ENCODE measurements at regions of chr14 and their contacts with region 1.

Region 1: GRCh38 chr14:34098045-34098984 is 147.4 kb upstream of the EGLN3 start:
- DNase-seq: peak; percentile 53
- H3K4me3 ChIP-seq: no peak overlapping the region
- H3K27ac ChIP-seq: no peak overlapping the region
- H3K4me1 ChIP-seq: peaks cover 13% of the 10 kb centered on the region
- H3K27me3 ChIP-seq: no peaks in the 10 kb centered on the region
- CTCF ChIP-seq: peak; percentile 52 to 69

Region 2: GRCh38 chr14:33839193-33840076 is 258.9 kb before region 1 on chr14:
- CTCF ChIA-PET with region 1: interaction called, 10 read pairs
- dilution Hi-C with region 1: loop called (anchors 5 kb)
- in situ Hi-C with region 1: no loop called
- intact Hi-C with region 1: loop called (anchors 1 kb)
- DNase-seq: peak; percentile 24
- H3K4me3 ChIP-seq: no peak overlapping the region
- H3K27ac ChIP-seq: no peak overlapping the region
- H3K4me1 ChIP-seq: peaks cover 16% of the 10 kb centered on the region
- H3K27me3 ChIP-seq: no peaks in the 10 kb centered on the region
- CTCF ChIP-seq: peak; percentile 79 to 90

Region 3: GRCh38 chr14:33859306-33859705 is 239.0 kb before region 1 on chr14:
- CTCF ChIA-PET with region 1: no interaction called
- dilution Hi-C with region 1: no loop called
- in situ Hi-C with region 1: loop called in 1 of 2 experiments (anchors 10 kb)
- intact Hi-C with region 1: no loop called
- DNase-seq: no peak
- H3K4me3 ChIP-seq: no peak overlapping the region
- H3K27ac ChIP-seq: no peak overlapping the region
- H3K4me1 ChIP-seq: peaks cover 4% of the 10 kb centered on the region
- H3K27me3 ChIP-seq: no peaks in the 10 kb centered on the region
- CTCF ChIP-seq: no peak

Region 4: GRCh38 chr14:33950320-33951182 is 147.8 kb before region 1 on chr14 and contains the start of gene EGLN3:
- CTCF ChIA-PET with region 1: no interaction called
- dilution Hi-C with region 1: no loop called
- in situ Hi-C with region 1: no loop called
- intact Hi-C with region 1: loop called (anchors 5 kb)
- DNase-seq: peak; percentile 87
- H3K4me3 ChIP-seq: peak within 1 kb of the TSS; percentile 57 to 86 (median 70)
- H3K27ac ChIP-seq: peak within 1 kb of the TSS; percentile 22
- H3K4me1 ChIP-seq: peaks cover 4% of the 10 kb centered on the region
- H3K27me3 ChIP-seq: no peaks in the 10 kb centered on the region
- CTCF ChIP-seq: no peak
- total RNA-seq, gene EGLN3: 8.3 to 9.0 TPM

Region 5: GRCh38 chr14:34051966-34052657 is 46.2 kb before region 1 on chr14:
- CTCF ChIA-PET with region 1: no interaction called
- dilution Hi-C with region 1: no loop called
- in situ Hi-C with region 1: no loop called
- intact Hi-C with region 1: no loop called
- DNase-seq: peak; percentile 95
- H3K4me3 ChIP-seq: no peak overlapping the region
- H3K27ac ChIP-seq: peak overlapping the region; percentile 73
- H3K4me1 ChIP-seq: peaks cover 49% of the 10 kb centered on the region
- H3K27me3 ChIP-seq: no peaks in the 10 kb centered on the region
- CTCF ChIP-seq: no peak

Region 6: DNA sequence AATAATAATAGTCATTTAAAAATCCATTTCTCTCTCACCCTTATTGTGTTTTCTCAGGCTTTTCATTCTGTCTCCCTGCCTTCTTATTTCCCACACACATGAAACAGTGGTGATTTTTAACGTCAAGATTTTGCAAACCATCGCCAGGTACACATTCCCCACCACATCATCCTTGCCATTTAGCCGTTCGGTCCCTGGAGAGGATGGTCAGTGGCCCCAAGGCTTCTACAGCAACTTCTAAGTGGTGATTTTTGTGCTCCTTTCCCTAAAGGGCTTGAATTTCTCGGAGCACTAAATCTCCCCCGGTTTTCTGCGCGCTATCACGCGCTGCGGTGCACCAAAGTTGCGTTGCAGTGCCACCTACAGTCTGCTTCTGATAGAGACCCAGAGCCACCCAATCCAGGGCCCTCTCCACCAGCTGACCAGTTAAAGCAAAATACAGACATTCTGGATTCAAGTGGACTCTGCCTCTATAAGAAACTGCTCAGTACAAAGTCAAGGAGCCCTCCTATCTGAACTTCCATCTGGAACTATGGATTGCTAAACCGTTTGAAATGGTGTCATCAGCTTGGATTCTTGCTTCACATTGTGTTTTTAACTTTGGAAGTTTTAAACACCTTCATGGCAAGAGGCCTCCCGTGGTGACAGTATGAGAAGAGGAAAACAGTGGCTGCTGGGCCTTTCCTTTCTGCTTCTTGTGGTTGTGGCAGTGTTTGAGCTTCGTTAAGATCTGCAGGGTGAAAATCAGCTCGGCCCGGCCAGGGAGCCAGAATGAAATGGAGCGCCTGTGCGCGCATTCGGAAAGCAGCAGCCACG is 129.7 kb after region 1 on chr14:
- CTCF ChIA-PET with region 1: no interaction called
- dilution Hi-C with region 1: no loop called
- in situ Hi-C with region 1: no loop called
- intact Hi-C with region 1: loop called (anchors 1 kb)
- DNase-seq: peak; percentile 50
- H3K4me3 ChIP-seq: peak overlapping the region in 1 of 3 experiments; percentile 13
- H3K27ac ChIP-seq: no peak overlapping the region
- H3K4me1 ChIP-seq: peaks cover 3% of the 10 kb centered on the region
- H3K27me3 ChIP-seq: no peaks in the 10 kb centered on the region
- CTCF ChIP-seq: peak; percentile 71 to 80

Region 7: DNA sequence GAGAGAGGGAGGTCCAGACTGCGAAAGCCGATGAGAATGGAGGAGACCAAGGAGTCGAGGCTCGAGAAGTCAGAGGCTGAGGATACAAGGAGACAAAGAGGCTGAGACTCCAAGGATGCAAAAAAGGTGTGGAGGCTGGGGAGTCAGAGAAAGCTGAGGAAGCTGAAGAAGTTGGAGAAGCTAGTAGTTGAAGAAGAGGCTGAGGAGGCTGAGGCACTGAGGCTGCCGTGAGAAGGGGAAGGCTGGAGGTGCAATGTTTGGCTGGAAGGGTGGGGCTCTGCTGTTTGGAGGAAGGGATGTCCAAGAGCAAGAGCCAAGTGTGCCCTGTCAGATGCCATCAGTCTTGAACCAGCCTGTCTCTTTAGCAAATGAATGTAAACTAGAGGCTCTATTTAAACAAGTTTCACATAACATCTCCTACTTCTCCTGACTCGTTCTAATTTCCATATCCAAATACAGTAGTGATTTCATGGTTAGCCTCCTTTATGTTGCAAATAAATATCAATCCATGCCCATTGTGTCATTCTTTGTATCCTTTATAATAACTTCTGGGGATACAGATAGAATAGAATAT is 374.5 kb after region 1 on chr14:
- CTCF ChIA-PET with region 1: no interaction called
- dilution Hi-C with region 1: no loop called
- in situ Hi-C with region 1: no loop called
- intact Hi-C with region 1: no loop called
- DNase-seq: no peak
- H3K4me3 ChIP-seq: no peak overlapping the region
- H3K27ac ChIP-seq: no peak overlapping the region
- H3K4me1 ChIP-seq: no peaks in the 10 kb centered on the region
- H3K27me3 ChIP-seq: no peaks in the 10 kb centered on the region
- CTCF ChIP-seq: no peak

Measured in mammary epithelial cell (primary cell).